Right cardiac atrium (tissue), 5 donors: ENCODE measurements at regions of chr6 and their contacts with region 1.

Region 1: DNA sequence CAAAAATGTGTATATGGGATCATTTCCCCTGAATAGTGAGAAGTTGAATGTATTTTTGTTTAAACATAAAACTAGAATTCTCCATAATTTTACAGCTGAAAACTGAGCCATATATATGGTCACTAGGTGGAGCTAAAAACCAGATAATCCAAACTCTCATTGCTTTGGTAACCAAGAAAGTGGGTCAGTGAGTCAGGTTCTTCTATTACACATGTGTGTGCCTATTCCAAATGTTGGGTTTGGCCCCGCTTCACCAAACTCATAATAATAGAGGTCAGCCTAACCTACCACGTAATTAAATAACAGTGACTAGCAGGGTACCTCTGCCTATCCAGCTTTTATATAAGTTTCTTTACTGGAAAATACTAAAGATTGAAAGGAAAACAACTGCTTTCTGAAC is 19.3 kb upstream of the RNGTT start:
- DNase-seq: peak in 2 of 3 donors; percentile 52 to 74
- ATAC-seq: peak; percentile 95 to 98
- H3K4me3 ChIP-seq: no peak overlapping the region
- H3K27ac ChIP-seq: no peak overlapping the region
- H3K4me1 ChIP-seq: no peaks in the 10 kb centered on the region
- H3K27me3 ChIP-seq: no peaks in the 10 kb centered on the region

Region 2: GRCh38 chr6:89035252-89036106 is 52.8 kb after region 1 on chr6:
- intact Hi-C with region 1: loop called in 1 of 4 experiments (anchors 10 kb)
- DNase-seq: peak; percentile 85 to 94 (median 93)
- ATAC-seq: peak; percentile 96
- H3K4me3 ChIP-seq: no peak overlapping the region
- H3K27ac ChIP-seq: peak overlapping the region; percentile 96
- H3K4me1 ChIP-seq: peaks cover 5% of the 10 kb centered on the region
- H3K27me3 ChIP-seq: no peaks in the 10 kb centered on the region

Region 3: GRCh38 chr6:89080542-89081422 is 98.1 kb after region 1 on chr6 and contains the start of gene PNRC1:
- intact Hi-C with region 1: loop called in 2 of 4 experiments (anchors 5 to 10 kb)
- DNase-seq: peak; percentile 100
- ATAC-seq: peak; percentile 92 to 94
- H3K4me3 ChIP-seq: peak within 1 kb of the TSS; percentile 98
- H3K27ac ChIP-seq: peak within 1 kb of the TSS; percentile 100
- H3K4me1 ChIP-seq: no peaks in the 10 kb centered on the region
- H3K27me3 ChIP-seq: no peaks in the 10 kb centered on the region
- total RNA-seq, gene PNRC1: 200 to 225 (median 213) TPM

Region 4: DNA sequence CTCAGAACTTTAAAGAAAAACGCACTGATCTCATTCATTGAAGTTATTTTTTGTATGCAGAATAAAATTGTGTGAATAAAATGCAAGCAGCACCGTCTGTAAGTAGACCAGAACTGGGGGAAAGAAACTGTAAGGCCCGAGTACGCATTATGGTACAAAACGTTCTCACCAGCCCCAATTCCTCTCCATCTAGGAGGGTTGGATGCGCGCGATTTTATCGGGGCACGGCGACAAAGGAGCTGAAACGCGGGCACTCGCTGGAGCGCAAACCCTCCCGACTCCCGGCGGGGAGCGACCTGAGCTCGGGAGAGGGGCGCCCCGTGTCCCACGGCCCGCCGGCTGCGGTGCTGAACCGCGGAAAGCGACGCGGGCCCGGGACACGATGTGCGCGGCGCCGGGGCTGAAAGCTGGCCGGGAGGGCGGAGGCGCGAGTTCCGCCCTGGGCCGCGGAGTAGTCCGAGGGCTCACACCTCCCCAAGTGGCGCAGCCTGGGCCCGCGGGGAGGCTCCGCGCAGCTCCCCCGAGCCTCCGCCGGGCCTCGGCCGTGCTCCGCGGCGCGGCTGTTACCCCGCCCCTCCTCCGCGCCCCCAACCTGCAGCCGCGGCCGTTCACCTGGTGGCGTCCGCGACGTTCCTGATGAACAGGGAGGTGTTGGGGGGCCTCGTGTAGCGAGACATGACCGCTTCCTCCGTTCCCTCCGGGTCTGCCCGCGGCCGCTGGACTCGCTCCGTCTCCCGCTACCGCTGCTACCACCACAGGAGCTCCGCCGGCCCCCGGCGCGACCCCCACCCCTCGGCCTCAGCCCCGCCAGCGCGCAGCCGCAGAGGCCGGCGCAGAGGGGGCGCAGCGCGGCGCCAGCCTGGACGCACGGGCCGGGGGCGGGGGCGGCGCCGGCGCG is 134.7 kb after region 1 on chr6 and contains the start of gene SRSF12:
- intact Hi-C with region 1: loop called in 2 of 4 experiments (anchors 10 kb)
- DNase-seq: peak; percentile 61 to 73 (median 73)
- ATAC-seq: peak; percentile 87 to 92
- H3K4me3 ChIP-seq: peak within 1 kb of the TSS; percentile 85
- H3K27ac ChIP-seq: no peak within 1 kb of the TSS
- H3K4me1 ChIP-seq: no peaks in the 10 kb centered on the region
- H3K27me3 ChIP-seq: no peaks in the 10 kb centered on the region
- total RNA-seq, gene SRSF12: 0.18 to 0.75 (median 0.45) TPM in 3 of 4 donors, not detected in the other

Region 5: DNA sequence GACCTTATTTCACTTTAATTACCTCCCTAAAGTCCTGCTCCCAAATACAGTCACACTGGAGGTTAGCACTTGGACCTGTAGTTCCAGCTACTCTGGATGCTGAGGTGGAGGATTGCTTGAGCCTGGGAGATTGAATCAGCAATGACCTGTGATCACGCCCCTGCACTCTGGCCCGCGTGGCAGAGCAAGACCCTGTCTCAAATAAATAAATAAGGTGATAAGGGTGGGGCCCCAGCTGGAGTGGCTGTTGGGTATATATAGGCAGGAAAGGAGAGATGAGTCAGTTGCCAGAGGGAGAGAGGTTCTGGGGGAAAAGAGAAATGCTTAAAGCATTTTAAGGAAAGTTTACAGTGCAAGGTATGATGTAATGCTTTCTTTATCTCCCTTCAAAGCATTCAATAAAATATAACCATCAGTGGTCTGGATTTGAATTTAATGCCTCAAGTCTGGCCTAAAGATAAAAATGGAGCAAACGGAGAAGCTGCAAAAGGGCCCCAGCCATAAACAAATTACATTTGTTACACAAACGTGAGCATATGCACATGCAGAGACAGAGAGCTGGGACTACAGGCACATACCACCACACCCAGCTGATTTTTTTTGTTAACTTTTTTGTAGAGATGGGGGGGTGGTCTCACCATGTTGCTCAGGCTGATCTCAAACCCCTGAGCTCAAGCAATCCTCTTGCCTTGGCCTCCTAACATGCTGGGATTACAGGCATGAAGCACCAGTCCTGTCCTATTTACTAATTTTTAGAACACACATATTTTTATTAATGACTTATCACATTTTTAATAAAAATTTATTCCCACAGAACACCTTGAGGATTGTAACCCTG is 157.0 kb after region 1 on chr6:
- intact Hi-C with region 1: loop called in 1 of 4 experiments (anchors 10 kb)
- DNase-seq: no peak
- ATAC-seq: no peak
- H3K4me3 ChIP-seq: no peak overlapping the region
- H3K27ac ChIP-seq: no peak overlapping the region
- H3K4me1 ChIP-seq: peaks cover 2% of the 10 kb centered on the region
- H3K27me3 ChIP-seq: no peaks in the 10 kb centered on the region

Region 6: DNA sequence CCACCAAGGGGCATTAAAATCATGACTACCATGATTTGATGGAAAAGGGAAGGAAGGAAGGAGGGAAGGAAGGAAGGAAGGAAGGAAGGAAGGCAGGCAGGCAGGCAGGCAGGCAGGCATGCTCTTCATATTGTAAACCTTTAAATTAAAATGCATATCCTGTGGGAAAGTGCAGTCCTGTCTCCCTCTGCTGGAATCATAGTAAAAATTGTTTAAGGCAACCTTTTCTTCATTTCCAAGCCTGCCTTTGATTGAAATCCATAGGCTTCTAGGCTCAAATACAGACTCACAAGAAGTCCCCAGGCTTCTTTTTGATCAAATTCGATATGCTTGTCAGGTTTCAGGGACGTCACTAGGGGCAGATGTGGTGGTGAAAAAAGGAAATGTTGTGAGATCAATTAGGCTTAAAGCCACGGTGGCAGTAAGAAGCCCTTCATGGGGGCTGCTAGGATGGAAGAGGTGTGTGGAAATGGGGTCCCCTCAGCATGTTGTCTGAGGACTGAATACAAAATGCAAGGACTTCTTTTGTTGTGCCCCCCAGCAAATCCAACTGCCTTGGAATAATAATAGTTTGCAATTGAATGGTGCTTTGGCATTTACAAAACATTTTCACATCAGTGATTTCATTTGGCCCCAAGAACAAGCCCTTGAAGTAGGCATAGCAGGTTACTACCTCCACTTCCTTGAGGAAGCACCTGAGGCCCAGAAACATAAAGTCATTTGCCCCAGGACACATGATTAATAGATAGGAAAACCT is 260.0 kb after region 1 on chr6:
- intact Hi-C with region 1: loop called (anchors 2 to 5 kb)
- DNase-seq: no peak
- ATAC-seq: no peak
- H3K4me3 ChIP-seq: no peak overlapping the region
- H3K27ac ChIP-seq: no peak overlapping the region
- H3K4me1 ChIP-seq: peaks cover 1% of the 10 kb centered on the region
- H3K27me3 ChIP-seq: no peaks in the 10 kb centered on the region

Region 7: GRCh38 chr6:89311853-89312531 is 329.3 kb after region 1 on chr6:
- intact Hi-C with region 1: loop called in 1 of 4 experiments (anchors 5 kb)
- DNase-seq: peak; percentile 68 to 88 (median 83)
- ATAC-seq: peak; percentile 75 to 84
- H3K4me3 ChIP-seq: no peak overlapping the region
- H3K27ac ChIP-seq: peak overlapping the region; percentile 29
- H3K4me1 ChIP-seq: peaks cover 13% of the 10 kb centered on the region
- H3K27me3 ChIP-seq: no peaks in the 10 kb centered on the region